Activated CD4-positive, alpha-beta T cell treated with anti-CD3 and anti-CD28 coated beads, Interleukin-2, amount 10 ng/mL, durations not matched to agents 24 days and 14 days (primary cell): ENCODE measurements at regions of chr3 and their contacts with region 1.

Region 1: GRCh38 chr3:196219194-196219978 is 3.1 kb downstream of the SLC51A start:
- DNase-seq: peak; percentile 91
- H3K4me3 Mint-ChIP-seq: peak overlapping the region; percentile 69
- H3K27ac Mint-ChIP-seq: peak overlapping the region; percentile 89
- H3K4me1 Mint-ChIP-seq: peaks cover 13% of the 10 kb centered on the region
- H3K27me3 Mint-ChIP-seq: no peaks in the 10 kb centered on the region

Region 2: DNA sequence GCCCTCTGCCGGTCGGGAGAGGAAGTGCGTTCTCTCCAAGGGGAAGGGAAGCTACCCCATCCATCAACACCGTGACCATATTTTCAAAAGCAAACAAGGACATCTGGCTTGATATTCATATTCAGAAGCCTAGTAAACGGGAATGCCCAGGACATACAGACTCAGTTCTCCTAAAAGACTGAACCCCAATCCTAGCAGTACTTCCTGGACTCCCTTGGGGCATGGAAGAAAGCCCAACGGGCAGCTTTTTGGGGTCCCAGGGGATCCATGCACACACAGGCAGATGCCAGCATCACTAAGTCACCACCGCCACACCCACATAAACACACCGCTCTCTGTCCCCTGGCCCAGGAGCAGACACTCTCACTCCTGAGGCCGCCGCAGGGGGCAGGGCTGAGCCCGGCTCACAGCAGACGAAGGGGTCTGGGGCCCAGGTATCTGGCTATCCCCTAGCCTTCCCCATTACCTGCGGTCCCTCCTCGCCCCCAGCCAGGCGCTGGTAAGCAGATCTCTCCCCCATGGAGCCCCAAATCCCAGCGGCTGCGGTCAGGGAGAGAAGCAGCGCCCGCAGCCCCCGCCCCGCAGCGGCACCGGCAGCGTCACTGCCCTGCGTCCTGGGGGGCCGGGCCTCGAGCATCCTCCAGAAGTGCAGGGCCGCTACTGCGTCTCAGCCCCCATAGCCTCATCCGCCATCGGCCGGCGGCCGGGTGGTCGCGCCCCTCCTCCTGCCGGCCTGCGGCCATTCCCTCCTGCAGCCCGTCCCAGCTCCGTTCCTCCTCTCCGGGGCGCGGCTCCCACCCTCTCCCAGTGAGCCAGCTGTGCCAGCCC is 324.4 kb before region 1 on chr3:
- intact Hi-C with region 1: no loop called
- DNase-seq: peak; percentile 91
- H3K4me3 Mint-ChIP-seq: peak overlapping the region; percentile 85
- H3K27ac Mint-ChIP-seq: peak overlapping the region; percentile 95
- H3K4me1 Mint-ChIP-seq: peaks cover 39% of the 10 kb centered on the region
- H3K27me3 Mint-ChIP-seq: no peaks in the 10 kb centered on the region

Region 3: GRCh38 chr3:196207833-196208607 is 11.4 kb before region 1 on chr3:
- intact Hi-C with region 1: loop called (anchors 1 kb)
- DNase-seq: peak; percentile 85
- H3K4me3 Mint-ChIP-seq: peak overlapping the region; percentile 82
- H3K27ac Mint-ChIP-seq: peak overlapping the region; percentile 18
- H3K4me1 Mint-ChIP-seq: peaks cover 16% of the 10 kb centered on the region
- H3K27me3 Mint-ChIP-seq: peaks cover 28% of the 10 kb centered on the region

Region 4: GRCh38 chr3:197103766-197104165 is 884.4 kb after region 1 on chr3:
- intact Hi-C with region 1: no loop called
- DNase-seq: no peak
- H3K4me3 Mint-ChIP-seq: no peak overlapping the region
- H3K27ac Mint-ChIP-seq: no peak overlapping the region
- H3K4me1 Mint-ChIP-seq: no peaks in the 10 kb centered on the region
- H3K27me3 Mint-ChIP-seq: no peaks in the 10 kb centered on the region